ENCODE measurements at regions of chr22 and their contacts with region 1.

Region 1: GRCh38 chr22:19629720-19630419 is 84.4 kb upstream of the SEPTIN5 start:
- DNase-seq: peak; percentile 58 to 97 (median 80)

Region 2: DNA sequence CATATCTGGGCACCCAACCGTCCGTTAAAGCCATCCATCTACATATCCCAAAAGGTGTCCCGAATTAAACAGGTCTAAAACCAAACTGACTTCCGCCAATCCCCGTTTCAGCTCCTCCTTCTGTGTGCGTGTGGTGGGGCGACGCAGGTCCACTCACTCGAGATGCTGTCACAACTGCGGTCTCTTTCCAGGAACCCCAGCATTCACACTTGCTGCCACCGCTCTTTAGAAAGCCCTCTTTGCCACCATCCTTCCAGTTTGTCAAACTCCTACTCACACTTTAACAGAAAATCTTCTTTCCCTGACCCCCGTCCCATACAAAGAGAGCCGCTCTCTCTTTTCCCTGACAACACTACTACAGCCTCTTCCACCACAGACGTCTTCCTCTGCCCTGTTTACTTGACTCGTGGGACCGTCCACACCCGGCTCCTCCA is 485.9 kb before region 1 on chr22:
- intact Hi-C with region 1: loop called (anchors 2 kb)
- DNase-seq: no peak

Region 3: GRCh38 chr22:19479357-19480172 is 150.3 kb before region 1 on chr22 and contains the start of gene CDC45:
- intact Hi-C with region 1: loop called (anchors 10 kb)
- DNase-seq: peak; percentile 93 to 99 (median 96)

Region 4: DNA sequence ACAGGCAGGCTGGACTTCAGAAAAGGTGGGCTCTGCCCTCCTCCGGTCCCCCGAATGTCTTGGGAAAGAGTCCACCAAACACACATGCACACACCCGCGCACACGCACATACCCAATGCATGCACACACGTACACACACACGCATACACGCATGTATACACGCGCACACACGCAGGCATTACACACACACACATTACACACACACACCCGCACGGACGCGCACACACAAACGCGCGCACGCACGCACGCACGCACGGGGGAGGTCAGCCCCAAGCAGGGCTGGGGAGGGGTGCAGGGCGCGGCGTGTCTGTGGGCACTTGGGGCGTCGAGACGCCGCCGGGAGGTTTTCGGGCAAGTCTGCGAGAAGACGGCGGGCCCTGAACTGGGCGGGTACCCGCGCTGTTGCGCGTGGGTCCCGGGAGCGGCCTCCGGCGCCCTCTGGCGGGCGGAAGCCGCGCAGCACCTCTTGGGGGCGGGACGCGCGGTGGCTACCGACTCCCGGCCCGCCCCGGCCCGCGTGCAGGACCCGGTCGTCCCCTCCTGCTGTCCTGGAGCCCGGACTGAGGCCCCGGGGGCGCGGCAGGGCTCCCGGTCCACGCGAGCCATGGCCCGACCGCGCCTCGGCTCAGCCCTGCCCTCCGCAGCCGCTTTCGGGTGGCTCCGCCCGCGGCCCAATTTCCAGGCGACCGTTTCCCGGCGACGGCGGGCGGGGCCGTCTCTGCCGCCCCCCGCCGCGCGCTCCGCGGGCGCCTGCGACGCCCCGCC is 88.0 kb after region 1 on chr22:
- intact Hi-C with region 1: loop called (anchors 2 kb)
- DNase-seq: peak; percentile 61 to 96 (median 74)